ENCODE measurements at regions of chr17 and their contacts with region 1.

Region 1: DNA sequence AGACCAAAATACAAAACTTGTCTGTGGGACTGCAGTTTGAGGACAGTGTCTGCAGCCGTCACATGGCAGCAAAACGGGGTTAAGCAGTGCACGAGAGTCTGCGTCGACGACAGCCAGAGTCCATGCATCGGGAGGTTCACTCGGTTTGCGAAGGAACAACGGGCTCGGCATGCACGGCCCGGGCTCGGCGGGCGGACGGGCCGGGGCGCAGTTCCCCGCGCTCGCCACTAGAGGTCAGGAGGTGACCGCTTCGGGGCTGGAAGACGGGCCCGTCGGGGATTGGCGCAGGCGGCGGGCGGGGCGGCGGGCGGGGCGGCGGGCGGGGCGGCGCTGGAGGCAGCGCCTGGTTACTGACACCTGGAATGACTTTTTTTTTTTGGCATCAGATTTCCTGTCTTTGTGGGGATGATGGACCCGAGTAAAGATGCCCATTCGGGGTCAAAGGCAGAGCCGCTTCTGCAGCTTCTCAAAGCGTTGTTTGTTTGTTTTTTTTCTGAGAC is 6.5 kb downstream of the SCGB1C2 start:
- DNase-seq: peak; percentile 90
- H3K4me3 Mint-ChIP-seq: no peak overlapping the region
- H3K27ac Mint-ChIP-seq: no peak overlapping the region
- H3K4me1 Mint-ChIP-seq: no peaks in the 10 kb centered on the region
- H3K27me3 Mint-ChIP-seq: peaks cover 12% of the 10 kb centered on the region
- CTCF ChIP-seq: peak; percentile 68

Region 2: DNA sequence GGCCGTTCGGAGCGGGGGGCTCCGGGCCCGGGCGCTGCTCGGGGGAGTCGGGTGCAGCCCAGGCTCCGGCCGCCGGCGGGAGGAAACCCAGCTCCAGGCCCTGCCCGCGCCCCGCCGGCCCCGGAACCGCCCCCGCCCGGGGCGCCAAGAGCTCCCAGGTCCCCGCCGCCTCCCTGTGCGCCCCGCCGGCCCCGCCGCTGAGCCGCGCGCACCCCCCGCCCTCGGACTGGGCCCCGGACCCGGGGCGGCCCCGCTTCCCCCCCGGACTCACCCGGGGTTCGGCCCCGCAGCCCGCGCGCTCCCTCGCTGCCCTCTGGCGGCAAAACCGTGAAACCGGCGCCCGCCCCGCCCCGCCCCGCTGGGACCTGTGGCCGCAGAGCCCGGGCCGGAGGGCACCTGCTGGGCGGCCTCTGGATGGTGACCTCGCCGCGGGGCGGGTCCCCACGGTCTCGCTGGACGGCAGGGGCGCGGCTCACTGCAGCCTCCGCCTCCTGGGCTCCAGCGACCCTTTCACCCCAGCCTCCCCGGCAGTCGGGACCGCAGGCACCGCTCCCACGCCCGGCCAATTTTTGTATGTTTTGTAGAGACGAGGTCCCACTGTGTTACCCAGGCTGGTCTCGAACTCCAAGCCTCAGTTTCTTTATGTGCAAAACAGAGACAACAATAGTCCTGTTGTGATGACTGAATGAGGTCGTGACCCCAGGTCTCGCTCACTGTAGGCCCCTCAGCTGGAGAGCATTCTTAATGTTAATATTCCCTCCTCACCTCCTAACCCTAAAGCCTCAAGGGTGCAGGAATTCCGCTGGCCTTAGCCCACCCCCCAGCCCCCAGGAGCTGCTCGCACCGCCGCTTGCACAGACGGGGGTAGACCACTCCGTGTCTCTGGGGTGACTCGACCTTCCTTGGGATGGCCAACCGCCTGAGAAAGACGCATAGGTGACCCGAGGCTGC is 242.4 kb after region 1 on chr17:
- CTCF ChIA-PET with region 1: interaction called, 3 read pairs
- intact Hi-C with region 1: loop called (anchors 5 kb)
- DNase-seq: peak; percentile 74
- H3K4me3 Mint-ChIP-seq: peak overlapping the region; percentile 51
- H3K27ac Mint-ChIP-seq: no peak overlapping the region
- H3K4me1 Mint-ChIP-seq: peaks cover 16% of the 10 kb centered on the region
- H3K27me3 Mint-ChIP-seq: peaks cover 29% of the 10 kb centered on the region
- CTCF ChIP-seq: peak; percentile 39

Region 3: DNA sequence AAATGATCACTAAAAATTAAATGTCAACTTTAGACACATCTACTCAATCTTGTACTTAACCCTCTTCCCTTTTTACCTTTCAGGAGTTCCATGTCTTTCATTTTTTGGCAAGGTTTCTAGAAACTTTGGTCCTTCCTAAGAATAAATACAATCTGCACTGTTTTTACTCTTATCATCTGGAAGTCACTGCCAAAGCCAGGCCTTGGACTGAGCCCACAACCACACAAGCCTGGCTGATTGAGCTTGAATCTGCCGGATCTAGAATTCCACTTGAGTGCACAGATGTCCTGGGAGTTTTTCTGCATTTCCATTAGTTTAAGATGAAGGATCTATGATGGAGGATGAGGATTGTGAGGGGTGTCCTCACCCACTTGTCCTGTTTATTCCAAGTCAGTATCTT is 444.7 kb after region 1 on chr17:
- CTCF ChIA-PET with region 1: no interaction called
- intact Hi-C with region 1: no loop called
- DNase-seq: no peak
- H3K4me3 Mint-ChIP-seq: no peak overlapping the region
- H3K27ac Mint-ChIP-seq: no peak overlapping the region
- H3K4me1 Mint-ChIP-seq: no peaks in the 10 kb centered on the region
- H3K27me3 Mint-ChIP-seq: no peaks in the 10 kb centered on the region
- CTCF ChIP-seq: no peak

Measured in Calu3 (cell line).